ENCODE measurements at regions of chr2 and their contacts with region 1.

Region 1: GRCh38 chr2:216159144-216159543 is 50.0 kb downstream of the XRCC5 start:
- DNase-seq: no peak
- H3K4me3 ChIP-seq: no peak overlapping the region
- H3K27ac ChIP-seq: no peak overlapping the region
- H3K4me1 ChIP-seq: no peaks in the 10 kb centered on the region
- H3K27me3 ChIP-seq: no peaks in the 10 kb centered on the region
- CTCF ChIP-seq: no peak
- POLR2A ChIP-seq: no peak

Region 2: DNA sequence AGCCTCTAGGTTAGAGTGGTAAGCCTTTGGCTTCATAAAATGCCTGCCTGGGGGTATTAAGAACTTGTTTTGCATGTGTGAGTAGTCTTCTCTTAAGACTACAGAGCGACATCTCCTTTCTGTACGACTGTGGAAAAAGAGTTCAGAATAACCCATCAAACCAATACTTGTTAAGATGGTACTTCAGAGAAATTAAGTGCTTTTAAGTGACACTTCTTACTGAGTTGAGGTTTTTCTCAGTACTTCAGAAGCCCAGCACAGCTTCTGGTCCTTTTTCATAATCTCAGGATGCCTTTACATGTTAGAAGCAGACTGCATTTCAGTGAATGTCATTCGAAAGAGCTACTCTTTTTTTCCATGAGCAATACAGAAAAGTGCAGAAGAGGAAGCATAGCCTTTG is 39.2 kb before region 1 on chr2:
- CTCF ChIA-PET with region 1: no interaction called
- POLR2A ChIA-PET with region 1: no interaction called
- dilution Hi-C with region 1: no loop called
- intact Hi-C with region 1: loop called (anchors 5 kb)
- DNase-seq: no peak
- H3K4me3 ChIP-seq: no peak overlapping the region
- H3K27ac ChIP-seq: no peak overlapping the region
- H3K4me1 ChIP-seq: peaks cover 13% of the 10 kb centered on the region
- H3K27me3 ChIP-seq: no peaks in the 10 kb centered on the region
- CTCF ChIP-seq: no peak
- POLR2A ChIP-seq: no peak

Measured in endothelial cell of umbilical vein (primary cell).